ENCODE measurements at regions of chr6 and their contacts with region 1.

Region 1: DNA sequence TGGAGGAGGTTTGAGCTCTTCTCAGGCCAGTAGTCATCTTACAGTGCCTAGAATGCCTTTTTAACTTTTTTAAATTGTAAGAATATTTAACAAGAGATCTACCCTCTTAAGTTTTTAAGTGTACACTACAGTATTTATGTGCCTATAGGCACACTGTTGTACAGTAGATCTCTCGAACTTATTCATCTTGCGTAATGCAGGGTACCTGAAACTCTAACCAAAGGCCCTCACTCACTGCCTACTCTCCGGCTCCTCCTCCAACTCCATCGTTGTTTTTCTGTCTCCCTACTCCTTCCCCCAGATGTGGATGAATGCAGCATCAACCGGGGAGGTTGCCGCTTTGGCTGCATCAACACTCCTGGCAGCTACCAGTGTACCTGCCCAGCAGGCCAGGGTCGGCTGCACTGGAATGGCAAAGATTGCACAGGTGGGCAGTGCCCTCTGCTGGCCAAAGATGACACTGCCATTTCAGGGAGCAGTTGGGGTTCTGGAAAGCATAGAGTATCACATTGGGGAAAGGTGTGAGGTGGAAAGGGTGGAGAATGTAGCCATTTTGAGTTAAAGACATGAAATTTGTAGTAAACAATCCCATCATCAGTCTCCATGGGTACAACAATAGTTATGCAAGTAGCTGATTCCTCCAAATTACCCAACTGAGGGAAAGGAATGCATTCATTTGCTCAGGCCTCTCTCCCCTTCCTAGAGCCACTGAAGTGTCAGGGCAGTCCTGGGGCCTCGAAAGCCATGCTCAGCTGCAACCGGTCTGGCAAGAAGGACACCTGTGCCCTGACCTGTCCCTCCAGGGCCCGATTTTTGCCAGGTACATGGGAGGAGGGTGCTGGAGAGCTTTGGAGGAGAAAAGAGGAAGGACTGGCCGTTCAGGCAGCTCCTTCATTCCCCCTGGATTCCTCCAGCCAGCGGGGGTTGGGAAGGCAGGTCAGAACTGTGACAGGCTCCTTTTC is 18.4 kb upstream of the ZNF76 start:
- DNase-seq: peak; percentile 64 to 97
- H3K4me3 ChIP-seq: no peak overlapping the region
- H3K27ac ChIP-seq: no peak overlapping the region
- H3K4me1 ChIP-seq: peaks cover 11 to 40% (median 21%) of the 10 kb centered on the region in 4 experiments
- H3K27me3 ChIP-seq: peaks cover 2 to 28% (median 22%) of the 10 kb centered on the region in 4 experiments
- CTCF ChIP-seq: peak; percentile 93 to 97 (median 95)
- EP300 ChIP-seq: no peak
- POLR2A ChIP-seq: no peak
- RAD21 ChIP-seq: peak; percentile 99

Region 2: DNA sequence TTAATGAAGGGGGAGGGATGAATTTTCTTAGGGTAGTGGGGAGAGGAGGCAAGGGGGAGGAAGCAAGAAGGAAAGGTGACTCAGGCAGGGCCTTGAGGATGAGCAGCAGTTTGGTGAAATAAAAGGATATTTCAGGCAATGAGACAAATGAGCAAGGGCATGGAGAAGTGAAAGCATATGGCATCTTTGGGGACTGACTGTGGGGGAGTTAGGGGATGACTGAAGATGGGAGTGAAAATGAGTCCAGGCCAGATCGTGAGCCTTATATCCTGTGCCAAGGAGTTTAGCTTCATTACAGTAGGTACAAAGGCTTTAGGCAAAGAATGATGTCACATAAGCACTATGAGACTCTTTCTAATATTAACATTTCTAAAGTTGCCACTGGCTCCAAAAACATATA is 596.4 kb before region 1 on chr6:
- CTCF ChIA-PET with region 1: no interaction called
- POLR2A ChIA-PET with region 1: no interaction called
- DNase-seq: no peak
- H3K4me3 ChIP-seq: no peak overlapping the region
- H3K27ac ChIP-seq: no peak overlapping the region
- H3K4me1 ChIP-seq: no peaks in the 10 kb centered on the region
- H3K27me3 ChIP-seq: no peaks in the 10 kb centered on the region
- CTCF ChIP-seq: no peak
- EP300 ChIP-seq: no peak
- POLR2A ChIP-seq: no peak
- RAD21 ChIP-seq: no peak

Region 3: DNA sequence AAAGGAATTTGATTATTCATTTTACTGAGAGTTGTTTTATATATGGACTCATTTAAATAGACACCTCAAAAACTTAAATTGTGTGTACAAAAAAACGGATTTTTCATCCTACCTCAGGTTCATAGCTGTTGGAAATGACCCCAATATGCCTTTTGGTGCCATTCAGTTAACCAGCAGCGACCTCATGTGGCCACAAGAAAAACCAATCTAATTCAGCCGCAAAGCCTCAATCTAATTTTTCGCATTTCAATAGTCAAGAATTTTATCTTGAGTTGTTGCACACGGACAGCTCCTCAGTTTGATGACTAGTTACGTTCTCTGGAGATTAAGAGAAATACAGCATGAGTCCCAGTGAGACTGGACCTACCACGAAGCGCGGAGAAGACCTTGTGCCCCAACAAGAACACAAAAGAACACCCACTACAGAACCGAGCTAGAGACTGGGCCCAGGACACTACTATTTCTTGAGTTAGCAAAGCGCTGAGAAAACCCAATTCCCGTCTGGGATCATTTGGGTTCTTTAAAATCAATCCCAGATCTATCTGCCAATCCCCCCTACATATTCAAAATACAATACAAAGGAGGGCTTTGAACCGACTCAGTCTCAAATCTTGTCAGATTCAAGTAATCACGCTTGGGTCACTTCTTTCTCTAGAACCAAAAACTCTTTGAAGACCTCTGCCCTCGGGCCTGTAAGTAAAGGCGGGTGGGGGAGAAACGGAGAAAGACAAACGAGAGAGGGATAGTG is 101.0 kb before region 1 on chr6:
- CTCF ChIA-PET with region 1: interaction called, 118 read pairs
- POLR2A ChIA-PET with region 1: no interaction called
- DNase-seq: peak in 1 of 2 experiments; percentile 54
- H3K4me3 ChIP-seq: no peak overlapping the region
- H3K27ac ChIP-seq: no peak overlapping the region
- H3K4me1 ChIP-seq: peaks cover 0 to 3% (median under 1%) of the 10 kb centered on the region in 4 experiments; a peak in 1 of 7 replicates
- H3K27me3 ChIP-seq: peaks cover 0 to 12% (median 12%) of the 10 kb centered on the region in 4 experiments; a peak in 5 of 7 replicates
- CTCF ChIP-seq: peak in 2 of 3 experiments; percentile 81 to 82; a peak in 3 of 4 replicates
- EP300 ChIP-seq: no peak
- POLR2A ChIP-seq: no peak
- RAD21 ChIP-seq: peak; percentile 97 to 98

Region 4: DNA sequence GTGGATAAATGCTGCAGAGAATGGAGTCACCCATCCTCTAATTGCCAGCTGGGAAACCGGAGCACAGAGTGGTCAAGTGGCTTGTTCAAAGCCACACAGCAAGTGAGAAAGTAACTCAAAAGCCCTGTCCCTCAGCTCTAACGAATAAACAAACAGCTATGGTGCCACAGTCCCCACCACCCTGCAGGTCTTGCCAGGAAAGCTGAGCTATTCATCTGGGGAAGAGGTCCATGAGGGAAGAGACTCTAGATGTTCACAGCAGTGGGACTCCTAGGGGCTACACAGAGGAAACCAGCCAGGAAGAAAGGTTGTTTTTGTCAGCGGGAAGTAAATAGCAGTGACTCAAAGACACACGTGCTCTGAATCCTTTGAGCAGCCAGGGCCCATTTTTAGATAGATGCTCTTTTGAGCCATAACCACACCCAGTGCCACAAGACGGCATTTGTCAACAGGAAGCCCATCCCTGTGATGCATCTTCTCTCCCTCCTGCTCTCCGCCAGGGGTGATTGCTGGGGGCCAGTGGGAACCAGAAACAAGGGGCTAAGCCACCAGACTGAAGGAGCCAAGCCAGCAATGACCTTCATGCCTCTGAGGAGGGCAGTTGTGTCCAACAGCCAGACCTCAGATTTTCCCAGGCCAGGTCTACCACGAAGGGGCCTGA is 67.6 kb before region 1 on chr6:
- CTCF ChIA-PET with region 1: interaction called, 28 read pairs
- POLR2A ChIA-PET with region 1: no interaction called
- DNase-seq: no peak
- H3K4me3 ChIP-seq: no peak overlapping the region
- H3K27ac ChIP-seq: no peak overlapping the region
- H3K4me1 ChIP-seq: no peaks in the 10 kb centered on the region; a peak in 2 of 7 replicates
- H3K27me3 ChIP-seq: peaks cover 0 to 2% (median 0%) of the 10 kb centered on the region in 4 experiments; a peak in 2 of 7 replicates
- CTCF ChIP-seq: no peak
- EP300 ChIP-seq: no peak
- POLR2A ChIP-seq: no peak
- RAD21 ChIP-seq: no peak

Region 5: GRCh38 chr6:35202066-35202546 is 39.0 kb before region 1 on chr6:
- CTCF ChIA-PET with region 1: interaction called, 143 read pairs
- POLR2A ChIA-PET with region 1: interaction called, 5 read pairs
- DNase-seq: no peak
- H3K4me3 ChIP-seq: no peak overlapping the region
- H3K27ac ChIP-seq: no peak overlapping the region
- H3K4me1 ChIP-seq: peaks cover 0 to 7% (median 5%) of the 10 kb centered on the region in 4 experiments; a peak in 4 of 7 replicates
- H3K27me3 ChIP-seq: peaks cover 3 to 11% (median 6%) of the 10 kb centered on the region in 4 experiments; a peak in 5 of 7 replicates
- CTCF ChIP-seq: peak in 1 of 3 experiments; percentile 36; a peak in 1 of 4 replicates
- EP300 ChIP-seq: no peak
- POLR2A ChIP-seq: no peak
- RAD21 ChIP-seq: peak in 1 of 2 experiments; percentile 24; a peak in 1 of 4 replicates

Region 6: GRCh38 chr6:35230950-35231349 is 10.2 kb before region 1 on chr6:
- CTCF ChIA-PET with region 1: interaction called, 32 read pairs
- POLR2A ChIA-PET with region 1: interaction called, 12 read pairs
- DNase-seq: no peak
- H3K4me3 ChIP-seq: no peak overlapping the region
- H3K27ac ChIP-seq: no peak overlapping the region
- H3K4me1 ChIP-seq: peaks cover 0 to 2% (median under 1%) of the 10 kb centered on the region in 4 experiments; a peak in 3 of 7 replicates
- H3K27me3 ChIP-seq: peaks cover 0 to 6% (median 3%) of the 10 kb centered on the region in 4 experiments; a peak in 4 of 7 replicates
- CTCF ChIP-seq: no peak
- EP300 ChIP-seq: no peak
- POLR2A ChIP-seq: no peak
- RAD21 ChIP-seq: no peak

Region 7: DNA sequence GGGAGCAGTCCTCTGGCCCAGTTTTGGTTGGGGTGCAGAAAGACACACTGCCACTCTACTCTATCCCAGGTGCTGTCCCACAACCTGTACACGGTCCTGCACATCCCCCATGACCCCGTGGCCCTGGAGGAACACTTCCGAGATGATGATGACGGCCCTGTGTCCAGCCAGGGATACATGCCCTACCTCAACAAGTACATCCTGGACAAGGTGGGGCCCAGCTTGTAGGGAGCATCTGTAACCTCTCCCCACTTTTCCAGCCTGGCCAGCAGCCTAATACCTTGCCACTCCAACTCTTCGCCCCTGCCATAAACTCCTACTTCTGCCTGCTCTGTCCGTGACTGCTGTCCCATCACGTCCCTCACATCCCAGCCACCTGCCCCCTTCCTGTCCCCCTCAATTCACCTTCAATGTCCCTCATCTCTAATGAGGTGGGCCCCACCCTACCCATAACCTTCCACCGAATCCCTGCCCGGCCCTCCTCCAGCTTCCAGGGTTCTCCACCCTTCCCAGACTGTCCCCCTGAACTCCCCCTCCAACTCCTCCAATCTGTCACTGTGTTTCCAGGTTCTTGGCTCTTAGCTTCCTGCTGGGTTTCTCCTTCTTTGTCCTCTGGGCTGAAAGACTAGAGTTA is 68.6 kb after region 1 on chr6:
- CTCF ChIA-PET with region 1: no interaction called
- POLR2A ChIA-PET with region 1: no interaction called
- DNase-seq: no peak
- H3K4me3 ChIP-seq: no peak overlapping the region
- H3K27ac ChIP-seq: no peak overlapping the region
- H3K4me1 ChIP-seq: no peaks in the 10 kb centered on the region
- H3K27me3 ChIP-seq: no peaks in the 10 kb centered on the region; a peak in 1 of 7 replicates
- CTCF ChIP-seq: no peak
- EP300 ChIP-seq: no peak
- POLR2A ChIP-seq: no peak
- RAD21 ChIP-seq: no peak

Region 8: DNA sequence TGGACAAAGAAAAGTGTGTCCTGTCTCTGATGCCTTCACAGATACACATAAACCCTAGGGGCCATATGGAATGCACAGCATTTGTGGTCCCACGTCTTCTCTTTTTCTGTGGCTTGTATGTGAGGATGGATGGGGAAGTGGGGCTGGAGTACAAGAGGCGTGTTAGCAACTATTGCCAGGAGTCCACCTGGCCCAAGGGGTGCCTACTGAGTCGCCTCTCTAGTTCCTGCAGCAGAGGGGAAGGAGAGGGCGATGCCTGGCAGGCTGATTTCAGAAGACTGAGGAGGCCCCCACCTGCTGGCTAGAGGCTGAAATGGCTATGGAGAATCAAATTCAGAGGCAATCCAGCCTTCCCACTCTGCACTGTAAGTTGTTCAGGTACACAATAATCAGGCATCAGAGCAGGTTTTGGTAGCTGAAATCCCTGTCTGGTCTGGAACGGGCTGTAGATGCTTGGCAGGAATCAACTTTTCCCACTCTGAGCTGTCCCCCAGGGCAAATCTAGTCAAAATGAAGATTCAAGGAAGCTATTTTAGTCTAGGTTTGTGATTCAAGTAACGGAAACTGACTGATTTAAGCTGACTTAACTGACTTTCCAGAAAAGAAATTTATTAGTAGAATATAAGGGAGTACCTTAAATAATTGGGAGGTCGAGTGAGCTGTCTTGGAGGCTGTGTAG is 86.4 kb after region 1 on chr6:
- CTCF ChIA-PET with region 1: no interaction called
- POLR2A ChIA-PET with region 1: no interaction called
- DNase-seq: peak in 1 of 2 experiments; percentile 79
- H3K4me3 ChIP-seq: no peak overlapping the region
- H3K27ac ChIP-seq: no peak overlapping the region
- H3K4me1 ChIP-seq: 0 out of 7 replicates have a peak, but pooled peaks cover 0 to under 1% (median 0%) of the 10 kb centered on the region in 4 experiments
- H3K27me3 ChIP-seq: no peaks in the 10 kb centered on the region
- CTCF ChIP-seq: peak; percentile 51 to 84 (median 74)
- EP300 ChIP-seq: no peak
- POLR2A ChIP-seq: no peak
- RAD21 ChIP-seq: peak; percentile 62 to 76

Measured in H1 (cell line).